Activated CD4-positive, alpha-beta T cell treated with anti-CD3 and anti-CD28 coated beads for 36 hours (primary cell): ENCODE measurements at regions of chr18 and their contacts with region 1.

Region 1: DNA sequence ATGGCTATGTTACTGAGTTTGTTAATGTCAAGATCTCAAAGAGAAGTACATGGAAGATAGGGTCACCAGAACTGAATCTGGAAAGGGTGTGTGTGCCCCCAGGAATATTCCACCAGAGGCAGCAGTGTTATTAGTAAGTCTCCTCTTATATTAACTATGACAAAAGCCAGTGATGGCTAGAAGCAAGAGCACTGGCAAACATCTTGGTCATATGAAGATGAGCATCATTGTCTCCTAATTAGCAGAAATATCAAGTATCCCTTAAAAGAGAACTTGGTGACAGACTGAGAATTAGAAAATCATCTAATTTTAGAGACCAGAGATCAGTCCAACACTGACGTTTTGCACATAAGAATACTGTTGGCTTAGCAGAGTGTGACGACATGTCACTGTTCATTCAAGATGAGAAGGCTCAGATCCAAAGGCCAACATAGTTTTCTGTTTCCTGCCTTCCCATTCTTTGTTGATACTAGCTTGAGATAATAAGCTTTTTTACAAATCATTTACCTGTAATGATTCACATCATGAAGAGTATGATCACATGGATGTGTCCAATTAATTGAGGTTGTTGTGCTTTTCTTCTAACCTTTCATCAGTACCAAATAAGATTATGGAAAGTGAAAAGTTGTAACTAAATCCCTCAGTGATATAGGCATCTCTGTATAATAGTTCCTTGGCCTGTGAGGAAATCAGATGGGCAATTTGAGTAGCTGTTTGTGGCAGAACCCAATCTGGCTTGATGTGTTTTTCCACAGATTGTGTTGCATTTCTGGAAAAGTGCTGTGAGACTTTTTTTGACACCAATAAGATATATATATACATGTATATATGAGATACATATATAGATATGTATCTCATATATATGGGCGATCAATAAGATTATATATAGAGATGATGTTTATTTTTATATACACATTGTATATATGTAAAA is 44.5 kb downstream of the MAPRE2 start:
- DNase-seq: no peak
- ATAC-seq: no peak
- H3K4me3 Mint-ChIP-seq: no peak overlapping the region
- H3K27ac Mint-ChIP-seq: no peak overlapping the region
- H3K4me1 Mint-ChIP-seq: peaks cover 35% of the 10 kb centered on the region
- H3K27me3 Mint-ChIP-seq: no peaks in the 10 kb centered on the region

Region 2: DNA sequence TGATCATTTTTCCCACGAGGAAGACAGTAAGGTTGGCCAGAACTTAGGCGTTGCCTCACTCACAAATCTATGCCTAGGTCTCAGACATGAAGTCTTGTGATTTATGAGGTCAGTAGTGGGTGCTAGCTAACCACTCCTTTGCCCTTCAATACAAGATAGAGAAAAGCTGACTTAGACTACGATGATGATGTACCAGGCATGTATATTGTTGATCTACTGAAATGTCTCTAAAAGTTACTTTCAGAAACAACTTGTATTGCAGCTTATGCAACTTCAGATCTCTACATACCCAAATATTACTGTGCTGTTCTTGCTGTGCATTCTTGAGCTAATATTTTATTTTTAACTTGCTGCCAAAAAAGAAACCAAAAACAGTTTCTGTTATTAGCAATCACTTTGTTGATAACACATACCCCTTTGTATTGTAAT is 13.9 kb before region 1 on chr18:
- CTCF ChIA-PET with region 1: interaction called, 21 read pairs
- POLR2A ChIA-PET with region 1: no interaction called
- intact Hi-C with region 1: no loop called
- DNase-seq: no peak
- ATAC-seq: peak; percentile 44
- H3K4me3 Mint-ChIP-seq: no peak overlapping the region
- H3K27ac Mint-ChIP-seq: no peak overlapping the region
- H3K4me1 Mint-ChIP-seq: peaks cover 43% of the 10 kb centered on the region
- H3K27me3 Mint-ChIP-seq: no peaks in the 10 kb centered on the region